ENCODE measurements at regions of chr1 and their contacts with region 1.

Region 1: DNA sequence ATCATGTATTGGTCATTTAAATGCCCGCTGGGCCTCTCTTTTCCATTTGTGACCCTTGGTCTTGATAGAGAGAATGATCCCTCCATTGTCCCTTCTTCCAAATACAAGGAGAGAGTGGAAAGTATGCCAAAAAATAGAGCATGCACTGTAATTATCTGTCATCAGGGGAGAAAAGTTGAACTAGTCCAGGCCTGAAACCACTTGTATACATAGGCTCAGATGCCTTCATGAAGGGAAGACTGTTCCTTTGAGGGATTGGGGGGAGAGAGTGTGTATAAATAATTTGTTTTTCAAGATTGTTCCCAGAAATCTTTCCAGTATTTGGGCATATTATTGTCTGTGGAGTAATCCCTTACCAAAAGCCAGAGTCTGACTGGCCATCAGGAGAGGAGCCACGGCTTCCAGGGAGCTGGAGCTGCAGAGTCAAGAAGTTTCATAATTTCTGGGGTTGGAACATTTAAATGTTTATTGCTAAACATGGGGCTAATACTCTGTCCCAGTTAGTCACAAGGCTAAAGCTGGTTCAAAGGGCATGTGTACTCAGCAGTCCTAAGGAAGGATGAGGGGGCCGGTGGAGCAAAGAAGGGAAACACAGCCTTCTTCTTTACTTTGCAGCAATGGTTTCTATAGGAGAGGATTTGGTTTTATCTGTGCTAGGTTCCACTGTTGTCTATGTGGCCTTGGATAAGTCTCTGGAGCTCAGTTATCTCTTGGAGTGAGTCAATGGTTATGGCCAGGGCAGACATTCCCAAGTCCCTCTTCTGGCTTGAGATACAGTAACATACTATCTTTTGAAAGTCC is 9.6 kb downstream of the DENND2D start:
- DNase-seq: no peak
- ATAC-seq: peak; percentile 43

Region 2: DNA sequence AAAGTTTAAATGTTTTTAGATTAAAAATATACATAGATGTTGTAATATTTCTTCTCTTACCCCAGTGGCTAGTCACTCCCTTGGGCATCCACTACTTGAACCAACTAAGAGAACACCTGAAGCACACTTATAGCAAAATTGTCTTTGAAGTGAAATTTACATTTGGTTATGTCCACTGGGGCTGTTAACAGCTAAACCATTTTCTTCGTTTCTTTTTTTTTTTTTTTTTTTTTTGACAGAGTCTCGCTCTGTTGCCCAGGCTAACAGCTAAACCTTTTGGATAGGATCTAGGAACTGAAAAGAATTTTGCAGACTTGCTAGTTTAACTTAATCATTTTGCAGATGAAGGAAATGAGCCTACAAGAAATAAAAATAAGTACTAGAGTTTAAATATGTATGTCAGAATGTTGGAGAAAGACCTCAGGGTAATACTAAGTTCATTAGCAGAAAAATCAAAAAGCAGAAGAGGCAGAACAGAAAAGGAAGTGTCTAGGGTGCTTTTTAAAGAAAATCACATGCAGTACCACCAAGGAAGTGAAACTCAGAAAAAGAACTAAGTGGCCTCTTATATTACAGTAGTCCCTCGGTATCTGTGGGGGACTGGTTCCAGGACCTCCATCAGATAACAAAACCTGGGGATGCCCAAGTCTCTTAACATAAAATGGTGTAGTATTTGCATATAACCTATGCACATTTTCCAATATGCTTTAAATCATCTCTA is 62.8 kb before region 1 on chr1:
- intact Hi-C with region 1: loop called (anchors 2 kb)
- DNase-seq: no peak
- ATAC-seq: no peak

Region 3: GRCh38 chr1:111251570-111251969 is 60.7 kb after region 1 on chr1:
- intact Hi-C with region 1: no loop called
- DNase-seq: no peak
- ATAC-seq: peak; percentile 27